Activated B cell treated with CpG ODN at 0.5 μM for 24 hours (primary cell): ENCODE measurements at regions of chr3 and their contacts with region 1.

Region 1: DNA sequence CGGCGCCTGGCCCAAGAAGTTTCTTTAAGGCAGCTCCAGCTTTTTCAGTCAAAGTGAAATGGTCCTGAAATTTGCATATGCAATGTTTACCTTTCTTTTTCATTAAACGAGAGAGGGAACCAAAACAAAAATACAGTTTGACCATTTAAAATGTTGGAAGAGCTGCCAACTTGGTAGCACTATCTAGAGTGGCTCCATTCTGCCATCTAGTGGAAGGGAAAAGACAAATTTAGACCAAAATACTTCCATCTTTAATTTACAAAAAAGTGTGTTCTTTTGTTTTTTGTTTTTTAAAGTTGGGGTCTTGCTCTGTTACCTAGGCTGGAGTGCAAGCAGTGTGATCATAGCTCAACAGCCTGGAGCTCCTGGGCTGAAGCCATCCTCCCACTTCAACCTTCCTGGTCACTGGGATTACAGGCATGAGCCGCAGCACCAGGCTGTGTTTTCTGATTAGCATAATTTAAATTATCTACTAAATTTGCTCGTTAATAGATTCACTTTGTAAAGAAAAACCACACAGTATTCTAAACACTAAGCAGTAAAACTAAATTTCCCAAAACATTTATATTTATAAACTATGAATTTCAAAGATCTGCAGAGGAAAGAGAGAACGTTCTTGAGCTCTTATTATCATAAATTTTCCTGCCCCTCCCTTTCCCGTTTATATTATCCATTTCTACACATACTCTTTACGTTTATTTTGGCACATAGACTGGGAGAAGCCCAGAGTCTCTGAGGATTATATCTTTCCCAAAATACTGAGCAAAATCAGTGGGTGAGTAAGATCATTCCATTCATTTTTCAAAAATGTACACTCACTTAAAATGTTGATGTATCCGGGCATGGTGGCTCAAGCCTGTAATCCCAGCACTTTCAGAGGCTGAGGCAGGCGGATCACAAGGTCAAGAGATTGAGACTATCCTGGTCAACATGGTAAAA is 15.4 kb upstream of the RFC4 start:
- DNase-seq: no peak
- ATAC-seq: no peak
- H3K4me3 Mint-ChIP-seq: no peak overlapping the region
- H3K27ac Mint-ChIP-seq: no peak overlapping the region
- H3K4me1 Mint-ChIP-seq: peaks cover 19% of the 10 kb centered on the region
- H3K27me3 Mint-ChIP-seq: peaks cover 16% of the 10 kb centered on the region
- CTCF ChIP-seq: peak; percentile 57

Region 2: DNA sequence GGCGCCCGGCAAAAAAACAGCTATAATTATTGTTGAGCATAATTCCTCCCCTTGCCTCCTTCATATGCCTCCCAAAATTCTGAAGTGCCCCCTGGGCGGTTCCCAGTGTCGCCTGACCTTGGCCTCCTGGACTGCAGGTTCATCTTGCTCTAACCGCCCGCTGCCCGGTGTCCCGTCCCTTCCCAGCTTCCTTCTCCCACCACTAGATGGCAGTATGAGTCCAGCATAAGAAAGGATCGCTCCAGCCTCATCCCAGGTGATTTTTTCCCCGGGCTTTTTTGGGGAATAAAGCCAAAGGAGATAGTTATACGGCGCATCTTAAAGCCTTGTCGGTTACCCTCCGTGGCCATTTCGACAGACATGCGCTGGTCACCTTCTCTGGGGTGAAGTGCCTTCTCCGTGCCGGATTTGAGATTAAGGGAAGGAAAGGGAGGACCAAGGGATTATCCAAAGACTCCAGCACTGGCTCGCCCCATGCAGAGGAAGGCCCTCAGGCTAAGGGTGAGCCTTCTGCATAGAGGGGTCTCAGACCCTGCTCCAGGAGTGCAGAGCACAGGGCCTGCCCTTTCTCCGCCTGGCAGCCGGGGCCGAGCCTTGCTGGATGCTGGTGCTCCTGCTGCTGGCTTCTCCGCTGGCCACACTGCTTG is 838.1 kb before region 1 on chr3:
- CTCF ChIA-PET with region 1: interaction called, 7 read pairs
- POLR2A ChIA-PET with region 1: no interaction called
- intact Hi-C with region 1: loop called (anchors 1 kb)
- DNase-seq: peak; percentile 37
- ATAC-seq: peak; percentile 82
- H3K4me3 Mint-ChIP-seq: no peak overlapping the region
- H3K27ac Mint-ChIP-seq: peak overlapping the region; percentile 30
- H3K4me1 Mint-ChIP-seq: peaks cover 4% of the 10 kb centered on the region
- H3K27me3 Mint-ChIP-seq: peaks cover 14% of the 10 kb centered on the region
- CTCF ChIP-seq: peak; percentile 91

Region 3: GRCh38 chr3:186722456-186722855 is 99.2 kb before region 1 on chr3:
- CTCF ChIA-PET with region 1: no interaction called
- POLR2A ChIA-PET with region 1: no interaction called
- intact Hi-C with region 1: loop called (anchors 1 kb)
- DNase-seq: no peak
- ATAC-seq: no peak
- H3K4me3 Mint-ChIP-seq: no peak overlapping the region
- H3K27ac Mint-ChIP-seq: no peak overlapping the region
- H3K4me1 Mint-ChIP-seq: no peaks in the 10 kb centered on the region
- H3K27me3 Mint-ChIP-seq: peaks cover 7% of the 10 kb centered on the region
- CTCF ChIP-seq: no peak

Region 4: DNA sequence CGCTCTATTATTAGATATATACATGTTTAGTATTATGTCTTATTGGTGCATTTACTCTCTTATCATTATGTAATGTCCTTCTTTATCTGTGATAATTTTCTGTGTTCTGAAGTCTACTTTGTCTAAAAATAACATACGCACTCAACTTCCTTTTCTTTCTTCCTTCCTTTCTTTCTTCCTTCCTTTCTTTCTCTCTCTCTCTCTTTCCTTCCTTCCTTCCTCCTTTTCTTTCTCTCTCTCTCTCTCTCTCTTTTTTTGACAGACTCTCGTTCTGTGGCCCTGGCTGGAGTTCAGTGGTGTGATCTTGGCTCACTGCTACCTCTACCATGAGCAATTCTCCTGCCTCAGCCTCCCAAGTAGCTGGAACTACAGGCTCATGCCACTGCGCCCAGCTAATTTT is 36.0 kb after region 1 on chr3:
- CTCF ChIA-PET with region 1: no interaction called
- POLR2A ChIA-PET with region 1: no interaction called
- intact Hi-C with region 1: no loop called
- DNase-seq: no peak
- ATAC-seq: no peak
- H3K4me3 Mint-ChIP-seq: no peak overlapping the region
- H3K27ac Mint-ChIP-seq: no peak overlapping the region
- H3K4me1 Mint-ChIP-seq: peaks cover 3% of the 10 kb centered on the region
- H3K27me3 Mint-ChIP-seq: no peaks in the 10 kb centered on the region
- CTCF ChIP-seq: no peak